Heart left ventricle (tissue), 16 donors: ENCODE measurements at regions of chr9 and their contacts with region 1.

Region 1: DNA sequence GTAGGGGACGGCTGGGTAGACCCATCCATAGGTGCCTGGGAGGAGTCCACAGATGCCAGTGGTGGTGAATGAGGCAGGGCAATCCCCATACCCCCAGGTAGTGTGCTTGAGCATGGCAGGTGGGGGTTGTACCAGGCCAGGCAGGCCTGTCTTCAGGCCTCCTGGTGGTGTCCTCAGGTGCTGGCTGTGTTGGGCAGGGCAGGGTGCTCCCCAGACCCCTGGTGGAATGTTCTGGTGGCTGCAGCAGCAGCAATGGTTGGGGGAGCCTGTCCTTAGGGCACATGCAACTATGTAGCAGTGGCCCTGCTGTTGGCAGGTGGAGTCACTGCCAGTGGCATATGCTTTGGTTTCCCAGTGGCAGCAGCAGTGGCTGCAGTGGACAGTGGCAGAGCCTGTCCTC is 10.0 kb downstream of the ALG2 start:
- DNase-seq: no peak
- ATAC-seq: peak in 2 of 4 donors; percentile 26 to 49
- H3K4me3 ChIP-seq: no peak overlapping the region
- H3K27ac ChIP-seq: no peak overlapping the region
- H3K4me1 ChIP-seq: peaks cover 0 to 5% (median 0%) of the 10 kb centered on the region in 12 donors
- H3K27me3 ChIP-seq: no peaks in the 10 kb centered on the region
- CTCF ChIP-seq: no peak
- POLR2A ChIP-seq: no peak

Region 2: GRCh38 chr9:99176527-99177013 is 35.2 kb before region 1 on chr9:
- intact Hi-C with region 1: loop called in 1 of 10 experiments (anchors 2 kb)
- DNase-seq: no peak
- ATAC-seq: no peak
- H3K4me3 ChIP-seq: no peak overlapping the region
- H3K27ac ChIP-seq: no peak overlapping the region
- H3K4me1 ChIP-seq: peaks cover 0 to 3% (median 0%) of the 10 kb centered on the region in 12 donors
- H3K27me3 ChIP-seq: peaks cover 0 to 3% (median 0%) of the 10 kb centered on the region in 9 donors
- CTCF ChIP-seq: no peak
- POLR2A ChIP-seq: no peak

Region 3: DNA sequence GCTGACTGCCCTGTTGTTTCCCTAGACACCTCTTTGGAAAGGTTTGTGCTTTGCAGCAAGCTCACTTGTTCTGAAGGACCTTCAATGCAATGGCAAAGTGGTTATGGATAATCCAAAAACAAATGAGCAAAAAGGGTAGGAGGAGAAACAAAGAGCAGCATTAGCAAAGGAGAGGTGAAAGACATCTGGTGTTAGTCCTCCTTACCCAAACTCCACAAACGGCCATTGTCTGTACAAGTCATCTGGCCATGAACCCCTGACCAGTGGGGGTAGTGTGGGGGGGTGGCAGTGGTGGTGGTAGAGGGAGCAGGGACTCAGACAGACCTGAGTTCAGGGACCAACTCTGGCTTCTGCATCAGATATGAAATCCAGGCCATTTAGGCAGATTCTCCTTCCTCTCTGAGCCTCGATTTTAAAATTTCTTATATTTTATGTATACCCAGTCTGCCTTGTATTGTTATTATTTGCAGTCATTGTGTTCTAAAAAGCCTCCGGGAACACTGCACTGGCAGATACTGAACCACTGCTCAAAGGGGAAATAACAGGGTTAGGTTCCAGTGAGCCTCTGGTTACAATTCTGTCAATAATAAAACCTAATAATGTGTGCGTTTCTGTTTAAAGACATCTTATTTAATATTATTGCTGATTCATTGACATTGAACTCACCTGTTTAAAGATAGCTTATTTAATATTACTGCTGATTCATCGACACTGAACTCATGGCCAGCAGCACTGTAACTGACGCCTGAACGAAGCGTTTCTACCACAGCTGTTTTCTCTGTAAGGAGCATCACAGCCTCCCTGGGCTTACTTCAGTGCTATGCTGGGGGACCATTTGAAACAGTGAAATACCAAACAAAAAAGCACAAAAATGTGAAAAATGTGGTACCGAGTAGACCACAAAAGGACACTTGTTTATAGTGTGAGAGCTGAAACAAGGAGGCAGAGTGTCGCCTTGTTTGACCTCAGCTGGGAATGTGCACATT is 166.3 kb after region 1 on chr9:
- intact Hi-C with region 1: no loop called
- DNase-seq: no peak
- ATAC-seq: no peak
- H3K4me3 ChIP-seq: no peak overlapping the region
- H3K27ac ChIP-seq: no peak overlapping the region
- H3K4me1 ChIP-seq: no peaks in the 10 kb centered on the region
- H3K27me3 ChIP-seq: no peaks in the 10 kb centered on the region
- CTCF ChIP-seq: no peak
- POLR2A ChIP-seq: no peak